Caco-2 (cell line): ENCODE measurements at regions of chr1 and their contacts with region 1.

Region 1: DNA sequence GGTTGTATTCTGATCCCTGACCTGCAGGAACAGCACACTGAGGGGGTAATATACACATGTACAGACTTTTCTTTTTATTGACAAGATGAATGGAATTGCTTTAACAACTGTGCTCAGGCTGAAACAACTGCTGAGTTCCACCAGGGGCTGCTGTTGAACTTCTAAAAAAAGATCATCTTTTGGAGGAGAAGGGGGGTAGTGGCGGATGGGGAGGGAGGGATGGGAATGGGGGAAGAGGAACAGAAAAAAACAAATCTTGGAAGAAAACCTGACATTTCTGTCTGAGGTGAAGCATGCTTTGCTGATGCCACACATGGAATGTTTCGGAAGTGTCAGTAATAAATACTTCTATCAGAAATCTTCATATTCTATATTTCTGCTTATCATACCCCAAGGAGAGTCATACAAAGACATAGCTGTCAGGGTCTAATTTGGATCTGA is 75.0 kb downstream of the RWDD3 start:
- DNase-seq: peak in 1 of 2 experiments; percentile 33
- H3K4me3 ChIP-seq: no peak overlapping the region
- H3K4me3 Mint-ChIP-seq: no peak overlapping the region
- H3K27ac Mint-ChIP-seq: no peak overlapping the region
- H3K4me1 ChIP-seq: peaks cover 11% of the 10 kb centered on the region; the same call in 1 of the 2 replicates
- H3K4me1 Mint-ChIP-seq: peaks cover 10% of the 10 kb centered on the region
- H3K27me3 ChIP-seq: no peaks in the 10 kb centered on the region
- H3K27me3 Mint-ChIP-seq: peaks cover 2% of the 10 kb centered on the region
- CTCF ChIP-seq: peak; percentile 46 to 71

Region 2: DNA sequence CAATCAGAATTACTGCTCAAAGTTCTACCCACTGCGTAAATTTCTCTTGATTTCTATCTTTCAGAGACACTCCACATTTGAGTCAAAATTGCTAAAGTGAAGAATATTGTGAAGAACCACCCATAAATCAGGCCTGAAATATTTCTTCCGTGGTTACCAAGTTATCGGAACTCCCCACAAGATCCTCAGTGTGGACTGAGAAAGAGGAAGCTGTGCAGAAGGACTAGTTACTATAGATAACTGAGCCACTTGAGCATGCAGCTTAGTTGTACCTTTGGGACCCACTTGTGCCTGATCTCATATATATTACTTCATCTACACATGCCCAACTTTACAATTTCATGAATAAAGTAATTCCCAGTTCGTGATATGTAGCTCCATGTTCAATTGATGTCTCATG is 56.6 kb before region 1 on chr1:
- CTCF ChIA-PET with region 1: no interaction called
- POLR2A ChIA-PET with region 1: no interaction called
- intact Hi-C with region 1: no loop called
- DNase-seq: no peak
- H3K4me3 ChIP-seq: no peak overlapping the region
- H3K4me3 Mint-ChIP-seq: no peak overlapping the region
- H3K27ac Mint-ChIP-seq: no peak overlapping the region
- H3K4me1 ChIP-seq: peaks cover 18% of the 10 kb centered on the region
- H3K4me1 Mint-ChIP-seq: no peaks in the 10 kb centered on the region
- H3K27me3 ChIP-seq: no peaks in the 10 kb centered on the region
- H3K27me3 Mint-ChIP-seq: no peaks in the 10 kb centered on the region
- CTCF ChIP-seq: no peak

Region 3: DNA sequence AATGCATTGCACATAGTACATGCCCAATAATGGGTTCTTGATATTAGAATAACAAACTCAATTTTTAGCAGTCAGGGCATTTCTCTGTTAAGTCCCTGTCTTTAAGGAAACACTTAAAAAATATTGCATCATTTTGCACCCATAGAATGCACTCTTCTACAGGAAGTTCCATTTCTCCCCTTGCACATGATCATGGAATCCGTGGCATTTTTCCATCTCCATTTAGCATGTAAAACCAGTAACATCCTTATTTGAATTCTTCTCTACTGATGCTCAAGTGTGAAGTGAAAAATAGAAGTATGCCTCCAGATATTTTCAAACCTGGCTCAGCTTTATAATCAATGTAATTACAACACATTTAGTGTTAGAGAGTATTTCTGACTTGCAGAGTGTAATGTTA is 117.7 kb after region 1 on chr1:
- CTCF ChIA-PET with region 1: no interaction called
- POLR2A ChIA-PET with region 1: no interaction called
- intact Hi-C with region 1: no loop called
- DNase-seq: no peak
- H3K4me3 ChIP-seq: no peak overlapping the region
- H3K4me3 Mint-ChIP-seq: no peak overlapping the region
- H3K27ac Mint-ChIP-seq: no peak overlapping the region
- H3K4me1 ChIP-seq: no peaks in the 10 kb centered on the region
- H3K4me1 Mint-ChIP-seq: no peaks in the 10 kb centered on the region
- H3K27me3 ChIP-seq: no peaks in the 10 kb centered on the region
- H3K27me3 Mint-ChIP-seq: no peaks in the 10 kb centered on the region
- CTCF ChIP-seq: no peak

Region 4: DNA sequence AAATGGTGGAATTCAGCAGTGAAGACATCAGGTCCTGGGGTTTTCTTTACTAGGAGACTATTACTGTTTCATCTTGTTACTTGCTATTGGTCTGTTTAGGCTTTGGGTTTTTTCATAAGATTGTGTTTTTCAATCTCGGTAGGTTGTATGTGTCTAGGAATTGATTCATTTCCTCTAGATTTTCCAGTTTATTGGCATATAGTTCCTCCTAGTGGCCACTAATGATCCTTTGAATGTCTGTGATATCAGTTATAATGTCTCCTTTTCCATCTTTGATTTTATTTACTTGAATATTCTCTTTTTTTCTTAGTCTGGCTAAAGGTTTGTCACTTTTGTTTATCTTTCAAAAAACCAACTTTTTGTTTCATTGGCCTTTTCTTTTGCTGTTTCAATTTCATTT is 158.0 kb after region 1 on chr1:
- CTCF ChIA-PET with region 1: no interaction called
- POLR2A ChIA-PET with region 1: no interaction called
- intact Hi-C with region 1: loop called (anchors 5 kb)
- DNase-seq: no peak
- H3K4me3 ChIP-seq: no peak overlapping the region
- H3K4me3 Mint-ChIP-seq: no peak overlapping the region
- H3K27ac Mint-ChIP-seq: no peak overlapping the region
- H3K4me1 ChIP-seq: no peaks in the 10 kb centered on the region
- H3K4me1 Mint-ChIP-seq: no peaks in the 10 kb centered on the region
- H3K27me3 ChIP-seq: no peaks in the 10 kb centered on the region
- H3K27me3 Mint-ChIP-seq: no peaks in the 10 kb centered on the region
- CTCF ChIP-seq: no peak

Region 5: DNA sequence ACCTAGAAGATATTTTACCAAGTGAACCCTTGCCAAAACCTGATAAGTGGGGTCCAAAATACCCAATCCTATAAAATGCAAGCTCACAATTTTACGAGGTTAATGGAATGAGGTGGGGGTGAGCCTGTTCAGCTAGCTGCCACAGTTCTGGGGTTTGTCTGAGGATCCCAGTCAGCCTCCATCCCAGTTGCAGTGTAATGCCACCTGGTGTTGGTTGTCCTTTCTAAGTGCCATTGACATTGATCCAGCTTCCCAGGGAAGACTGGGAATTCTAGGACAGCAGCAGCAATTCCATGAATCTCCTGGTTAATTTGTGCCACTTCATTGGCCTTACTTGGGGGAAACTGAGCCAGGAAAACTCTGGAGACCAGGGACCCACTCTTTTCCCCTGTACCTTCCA is 223.3 kb after region 1 on chr1:
- CTCF ChIA-PET with region 1: no interaction called
- POLR2A ChIA-PET with region 1: no interaction called
- intact Hi-C with region 1: loop called (anchors 1 kb)
- DNase-seq: peak in 1 of 2 experiments; percentile 3
- H3K4me3 ChIP-seq: no peak overlapping the region
- H3K4me3 Mint-ChIP-seq: no peak overlapping the region
- H3K27ac Mint-ChIP-seq: no peak overlapping the region
- H3K4me1 ChIP-seq: no peaks in the 10 kb centered on the region
- H3K4me1 Mint-ChIP-seq: no peaks in the 10 kb centered on the region
- H3K27me3 ChIP-seq: no peaks in the 10 kb centered on the region
- H3K27me3 Mint-ChIP-seq: no peaks in the 10 kb centered on the region
- CTCF ChIP-seq: peak in 1 of 2 experiments; percentile 5